ENCODE measurements at regions of chr11 and their contacts with region 1.

Region 1: GRCh38 chr11:119323538-119324033 is 6.7 kb upstream of the MCAM start:
- DNase-seq: peak; percentile 60 to 78 (median 72)
- H3K4me3 ChIP-seq: no peak overlapping the region
- H3K27ac ChIP-seq: no peak overlapping the region
- H3K4me1 ChIP-seq: peaks cover 0 to 19% (median 17%) of the 10 kb centered on the region in 4 experiments
- H3K27me3 ChIP-seq: peaks cover 0 to 21% (median 8%) of the 10 kb centered on the region in 5 experiments

Region 2: GRCh38 chr11:119306373-119306890 is 17.2 kb before region 1 on chr11:
- CTCF ChIA-PET with region 1: interaction called, 25 read pairs
- POLR2A ChIA-PET with region 1: interaction called, 6 read pairs
- DNase-seq: no peak
- H3K4me3 ChIP-seq: no peak overlapping the region
- H3K27ac ChIP-seq: no peak overlapping the region
- H3K4me1 ChIP-seq: peaks cover 0 to 6% (median 0%) of the 10 kb centered on the region in 4 experiments
- H3K27me3 ChIP-seq: no peaks in the 10 kb centered on the region

Region 3: DNA sequence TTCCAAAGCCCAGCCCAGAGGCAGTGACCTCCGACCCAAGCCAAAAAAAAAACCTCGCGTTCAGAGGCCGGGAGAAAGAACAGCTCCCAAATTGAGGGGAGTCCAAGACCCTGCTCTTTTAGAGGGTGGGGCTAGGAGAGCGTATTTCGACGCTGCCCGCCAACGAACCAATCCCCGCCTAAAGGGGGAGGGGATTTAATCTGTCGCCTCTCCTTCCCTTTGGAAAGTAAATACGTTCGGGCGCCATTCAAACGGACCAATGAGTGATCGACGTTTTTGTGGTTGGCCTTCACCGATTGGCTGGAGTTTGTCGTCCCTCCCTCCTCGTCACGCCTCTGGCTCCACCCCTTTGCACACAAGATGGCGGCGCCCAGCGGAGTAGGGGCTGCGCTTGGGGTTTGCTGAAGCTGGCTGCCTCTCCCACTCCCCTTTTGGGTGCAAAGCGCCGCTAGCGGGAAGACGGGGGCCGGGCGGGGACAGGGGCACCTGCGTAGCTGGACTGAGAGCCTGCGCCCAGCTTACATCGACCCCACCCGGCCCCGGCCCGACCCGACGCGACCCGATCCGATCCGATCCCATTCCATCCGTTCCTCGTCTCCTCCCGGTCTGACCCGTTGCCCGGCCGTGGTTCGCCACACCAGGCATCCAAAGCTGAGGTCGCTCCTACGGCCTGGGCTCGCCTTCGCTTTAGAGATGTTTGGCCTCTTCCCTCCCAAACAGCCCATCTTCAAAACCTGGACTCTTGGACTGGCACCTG is 10.8 kb after region 1 on chr11 and contains the start of gene RNF26:
- CTCF ChIA-PET with region 1: interaction called, 90 read pairs
- POLR2A ChIA-PET with region 1: no interaction called
- DNase-seq: peak; percentile 98
- H3K4me3 ChIP-seq: peak within 1 kb of the TSS; percentile 53 to 96 (median 93)
- H3K27ac ChIP-seq: peak within 1 kb of the TSS; percentile 79 to 90
- H3K4me1 ChIP-seq: peaks cover 0 to 29% (median 21%) of the 10 kb centered on the region in 4 experiments
- H3K27me3 ChIP-seq: peaks cover 0 to 10% (median 10%) of the 10 kb centered on the region in 5 experiments

Region 4: DNA sequence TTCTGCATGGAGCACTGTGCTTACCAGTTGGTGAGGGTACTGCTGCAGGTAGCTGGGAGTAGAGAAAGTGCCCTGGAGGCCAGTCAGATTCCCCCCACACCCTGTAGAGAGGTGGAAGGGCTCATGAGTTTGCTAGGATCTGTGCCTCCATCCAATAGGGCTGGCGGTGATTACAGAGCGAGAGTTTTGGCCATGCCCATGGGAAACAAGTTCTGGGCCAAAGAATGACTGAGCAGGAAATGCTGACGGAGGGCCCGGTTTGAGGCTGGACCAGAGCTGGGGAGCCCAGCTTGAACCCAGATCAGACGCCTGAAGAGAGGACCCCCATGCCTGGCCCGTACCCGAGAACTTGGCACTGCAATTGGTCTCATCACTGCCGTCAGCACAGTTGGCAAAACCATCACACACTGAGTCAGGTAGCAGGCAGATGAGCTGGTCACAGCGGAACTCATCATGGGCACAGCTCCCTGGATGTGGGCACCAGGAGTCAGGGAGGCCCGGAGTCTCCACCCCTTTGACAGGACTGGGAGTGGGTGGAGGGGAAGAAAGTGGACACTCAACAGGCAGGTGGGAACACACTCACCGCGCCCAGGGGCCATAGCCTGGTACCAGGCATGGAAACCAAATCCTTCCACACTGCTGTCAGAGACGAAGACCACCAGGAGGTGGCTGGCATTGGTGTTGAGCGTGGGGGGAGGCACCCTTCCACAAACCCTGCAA is 20.9 kb after region 1 on chr11:
- CTCF ChIA-PET with region 1: interaction called, 90 read pairs
- POLR2A ChIA-PET with region 1: no interaction called
- DNase-seq: no peak
- H3K4me3 ChIP-seq: no peak overlapping the region
- H3K27ac ChIP-seq: no peak overlapping the region
- H3K4me1 ChIP-seq: peaks cover 0 to 22% (median 21%) of the 10 kb centered on the region in 4 experiments
- H3K27me3 ChIP-seq: peaks cover 0 to 51% (median 18%) of the 10 kb centered on the region in 5 experiments